ENCODE measurements at regions of chr3 and their contacts with region 1.

Region 1: GRCh38 chr3:48151058-48151806 is 37.0 kb downstream of the CDC25A start:
- DNase-seq: peak; percentile 80 to 84
- H3K4me3 ChIP-seq: no peak overlapping the region
- H3K4me3 Mint-ChIP-seq: no peak overlapping the region
- H3K27ac Mint-ChIP-seq: no peak overlapping the region
- H3K4me1 ChIP-seq: no peaks in the 10 kb centered on the region
- H3K4me1 Mint-ChIP-seq: peaks cover 14% of the 10 kb centered on the region
- H3K27me3 ChIP-seq: no peaks in the 10 kb centered on the region
- H3K27me3 Mint-ChIP-seq: no peaks in the 10 kb centered on the region
- CTCF ChIP-seq: peak; percentile 81 to 87

Region 2: DNA sequence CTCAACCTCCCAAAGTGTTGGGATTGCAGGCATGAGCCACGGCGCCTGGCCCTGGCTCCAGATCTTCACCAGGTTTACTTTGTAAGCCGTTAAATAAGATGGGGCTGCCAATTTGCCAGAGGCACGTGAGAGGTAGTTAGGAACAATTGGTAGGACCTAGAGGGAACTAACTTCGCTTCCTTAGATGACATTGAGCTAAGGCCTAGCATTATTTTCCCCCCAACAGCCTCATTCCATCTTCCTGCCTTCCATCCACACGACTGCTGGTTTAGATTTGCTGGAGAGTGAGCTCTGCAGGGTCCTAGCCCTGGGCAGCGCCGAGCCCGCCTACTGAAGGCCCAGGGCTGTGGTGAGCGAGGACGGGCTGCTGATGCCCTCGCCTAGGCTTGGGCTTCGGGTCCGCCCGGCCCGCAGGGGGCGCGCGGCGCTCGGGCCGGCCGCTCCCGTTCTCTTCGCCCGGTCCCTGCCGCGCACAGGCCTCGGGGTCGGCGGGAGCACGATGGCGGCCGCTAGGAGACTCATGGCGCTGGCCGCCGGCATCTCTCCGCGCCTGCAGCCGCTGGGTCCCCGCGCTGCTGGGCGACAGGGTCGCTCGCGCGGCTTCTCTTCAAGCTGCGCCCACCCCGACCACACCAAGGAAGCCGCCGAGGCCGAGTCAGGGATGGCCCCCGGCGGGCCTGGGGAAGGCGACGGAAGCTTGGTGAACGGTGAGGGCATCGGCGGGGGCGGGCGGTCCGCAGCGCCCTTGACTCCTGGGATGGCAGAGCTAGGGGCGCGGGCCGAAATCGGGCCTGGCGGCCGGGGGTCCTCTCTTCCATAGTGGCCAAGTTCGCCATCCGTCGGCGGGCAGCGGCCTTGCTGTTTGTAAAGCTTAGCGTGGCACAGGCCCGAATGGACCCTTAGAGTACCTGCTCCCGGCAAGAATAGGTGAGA is 326.4 kb before region 1 on chr3:
- CTCF ChIA-PET with region 1: interaction called, 14 read pairs
- POLR2A ChIA-PET with region 1: no interaction called
- intact Hi-C with region 1: no loop called
- DNase-seq: peak; percentile 72 to 89
- H3K4me3 ChIP-seq: peak overlapping the region; percentile 66
- H3K4me3 Mint-ChIP-seq: peak overlapping the region; percentile 81
- H3K27ac Mint-ChIP-seq: peak overlapping the region; percentile 35
- H3K4me1 ChIP-seq: 0 out of 2 replicates have a peak, but pooled peaks cover 3% of the 10 kb centered on the region
- H3K4me1 Mint-ChIP-seq: peaks cover 6% of the 10 kb centered on the region
- H3K27me3 ChIP-seq: no peaks in the 10 kb centered on the region
- H3K27me3 Mint-ChIP-seq: no peaks in the 10 kb centered on the region
- CTCF ChIP-seq: peak; percentile 60 to 79

Region 3: DNA sequence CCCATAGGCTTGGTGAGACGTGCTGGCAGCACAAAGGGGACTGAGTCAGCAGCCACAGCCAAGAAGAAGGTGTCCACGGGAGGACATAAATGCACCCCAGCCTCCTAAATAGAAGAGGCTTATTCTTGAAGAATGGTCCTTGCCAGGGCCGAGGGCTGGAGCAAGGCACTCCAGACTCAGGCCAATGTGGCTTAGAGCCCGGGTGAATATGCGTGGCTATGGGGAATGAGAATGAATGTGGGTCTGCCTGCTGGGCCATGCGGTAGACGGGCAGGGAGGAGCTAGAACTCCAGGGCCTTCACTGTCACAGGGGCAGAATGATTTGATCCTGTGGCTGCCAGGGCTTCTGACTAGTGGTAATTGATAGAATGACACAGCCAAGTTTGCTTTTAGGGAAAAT is 314.2 kb before region 1 on chr3:
- CTCF ChIA-PET with region 1: interaction called, 29 read pairs
- POLR2A ChIA-PET with region 1: no interaction called
- intact Hi-C with region 1: loop called (anchors 1 kb)
- DNase-seq: no peak
- H3K4me3 ChIP-seq: no peak overlapping the region
- H3K4me3 Mint-ChIP-seq: no peak overlapping the region
- H3K27ac Mint-ChIP-seq: no peak overlapping the region
- H3K4me1 ChIP-seq: no peaks in the 10 kb centered on the region
- H3K4me1 Mint-ChIP-seq: peaks cover 7% of the 10 kb centered on the region
- H3K27me3 ChIP-seq: no peaks in the 10 kb centered on the region
- H3K27me3 Mint-ChIP-seq: no peaks in the 10 kb centered on the region
- CTCF ChIP-seq: no peak

Region 4: GRCh38 chr3:47849699-47850563 is 301.3 kb before region 1 on chr3:
- CTCF ChIA-PET with region 1: interaction called, 7 read pairs
- POLR2A ChIA-PET with region 1: no interaction called
- intact Hi-C with region 1: loop called (anchors 1 kb)
- DNase-seq: peak in 1 of 2 experiments; percentile 41
- H3K4me3 ChIP-seq: no peak overlapping the region
- H3K4me3 Mint-ChIP-seq: peak overlapping the region; percentile 29
- H3K27ac Mint-ChIP-seq: peak overlapping the region; percentile 58
- H3K4me1 ChIP-seq: no peaks in the 10 kb centered on the region
- H3K4me1 Mint-ChIP-seq: no peaks in the 10 kb centered on the region
- H3K27me3 ChIP-seq: no peaks in the 10 kb centered on the region
- H3K27me3 Mint-ChIP-seq: no peaks in the 10 kb centered on the region
- CTCF ChIP-seq: peak; percentile 40 to 42

Region 5: GRCh38 chr3:47989981-47990440 is 161.2 kb before region 1 on chr3:
- CTCF ChIA-PET with region 1: interaction called, 17 read pairs
- POLR2A ChIA-PET with region 1: no interaction called
- intact Hi-C with region 1: loop called (anchors 2 kb)
- DNase-seq: peak; percentile 74 to 76
- H3K4me3 ChIP-seq: no peak overlapping the region
- H3K4me3 Mint-ChIP-seq: no peak overlapping the region
- H3K27ac Mint-ChIP-seq: no peak overlapping the region
- H3K4me1 ChIP-seq: no peaks in the 10 kb centered on the region
- H3K4me1 Mint-ChIP-seq: no peaks in the 10 kb centered on the region
- H3K27me3 ChIP-seq: no peaks in the 10 kb centered on the region
- H3K27me3 Mint-ChIP-seq: no peaks in the 10 kb centered on the region
- CTCF ChIP-seq: peak; percentile 80 to 84

Region 6: DNA sequence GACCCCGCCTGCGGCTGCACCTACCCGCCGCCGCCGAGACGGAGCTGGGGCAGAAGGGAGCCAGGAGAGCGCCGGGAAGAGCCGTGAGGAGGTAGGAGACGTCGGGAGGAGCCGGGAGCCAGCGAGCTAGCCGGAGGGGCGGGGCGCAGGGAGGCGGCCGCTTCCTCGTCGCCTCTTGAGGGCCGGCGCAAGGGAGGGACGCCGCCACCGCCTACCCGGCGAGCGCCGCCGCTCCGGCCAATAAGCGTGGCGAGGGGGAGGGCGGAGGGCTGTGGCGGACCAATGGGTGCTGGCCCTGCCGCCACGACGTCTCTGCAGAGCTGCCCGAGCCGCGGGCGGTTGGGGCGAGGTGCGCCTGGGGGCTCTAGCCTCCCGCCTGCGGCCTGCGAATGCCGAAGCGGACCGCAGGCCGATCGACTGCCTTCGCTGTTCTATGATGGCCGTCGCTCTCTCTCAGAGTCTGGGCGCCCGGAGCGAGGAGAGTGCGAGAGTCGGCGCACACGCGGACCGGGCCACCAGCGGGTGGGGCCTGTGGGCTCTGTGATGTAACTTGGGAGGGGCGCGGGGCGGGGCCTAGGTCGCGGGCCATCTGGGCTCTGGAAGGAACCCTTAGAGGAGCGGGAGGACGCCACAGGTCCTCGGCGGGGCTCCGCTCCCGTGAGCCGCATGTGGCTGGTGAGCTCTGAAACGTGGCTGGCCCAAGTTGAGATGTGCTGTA is 62.3 kb before region 1 on chr3:
- CTCF ChIA-PET with region 1: interaction called, 24 read pairs
- POLR2A ChIA-PET with region 1: interaction called, 6 read pairs
- intact Hi-C with region 1: loop called (anchors 5 kb)
- DNase-seq: peak; percentile 96 to 98
- H3K4me3 ChIP-seq: peak overlapping the region; percentile 68
- H3K4me3 Mint-ChIP-seq: peak overlapping the region; percentile 96
- H3K27ac Mint-ChIP-seq: peak overlapping the region; percentile 99
- H3K4me1 ChIP-seq: peaks cover 20% of the 10 kb centered on the region
- H3K4me1 Mint-ChIP-seq: peaks cover 5% of the 10 kb centered on the region
- H3K27me3 ChIP-seq: no peaks in the 10 kb centered on the region
- H3K27me3 Mint-ChIP-seq: no peaks in the 10 kb centered on the region
- CTCF ChIP-seq: no peak

Region 7: GRCh38 chr3:48112813-48113212 is 38.4 kb before region 1 on chr3:
- CTCF ChIA-PET with region 1: interaction called, 19 read pairs
- POLR2A ChIA-PET with region 1: no interaction called
- intact Hi-C with region 1: no loop called
- DNase-seq: no peak
- H3K4me3 ChIP-seq: no peak overlapping the region
- H3K4me3 Mint-ChIP-seq: no peak overlapping the region
- H3K27ac Mint-ChIP-seq: no peak overlapping the region
- H3K4me1 ChIP-seq: no peaks in the 10 kb centered on the region
- H3K4me1 Mint-ChIP-seq: no peaks in the 10 kb centered on the region
- H3K27me3 ChIP-seq: no peaks in the 10 kb centered on the region
- H3K27me3 Mint-ChIP-seq: no peaks in the 10 kb centered on the region
- CTCF ChIP-seq: no peak

Region 8: DNA sequence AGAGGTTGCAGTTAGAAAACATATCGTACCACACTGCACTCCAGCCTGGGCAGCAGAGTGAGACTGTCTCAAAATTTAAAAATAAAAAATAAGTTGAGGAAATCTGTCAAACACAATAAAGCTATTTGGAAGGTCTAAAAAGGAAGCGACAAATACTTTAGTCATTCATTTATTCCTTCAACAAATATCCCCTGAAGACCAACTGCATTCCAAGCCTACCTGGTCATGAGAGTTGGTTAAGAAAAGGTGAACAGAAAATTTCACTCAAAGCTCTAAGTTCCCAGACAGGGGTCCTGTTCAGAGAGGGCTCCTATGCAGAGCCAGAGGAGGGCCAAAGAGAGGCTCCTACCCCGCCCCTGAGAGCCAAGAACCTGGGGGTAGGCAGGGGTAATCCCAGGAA is 711.9 kb after region 1 on chr3:
- CTCF ChIA-PET with region 1: no interaction called
- POLR2A ChIA-PET with region 1: no interaction called
- intact Hi-C with region 1: no loop called
- DNase-seq: no peak
- H3K4me3 ChIP-seq: no peak overlapping the region
- H3K4me3 Mint-ChIP-seq: no peak overlapping the region
- H3K27ac Mint-ChIP-seq: no peak overlapping the region
- H3K4me1 ChIP-seq: no peaks in the 10 kb centered on the region
- H3K4me1 Mint-ChIP-seq: no peaks in the 10 kb centered on the region
- H3K27me3 ChIP-seq: no peaks in the 10 kb centered on the region
- H3K27me3 Mint-ChIP-seq: no peaks in the 10 kb centered on the region
- CTCF ChIP-seq: no peak